ENCODE measurements at regions of chr3 and their contacts with region 1.

Region 1: DNA sequence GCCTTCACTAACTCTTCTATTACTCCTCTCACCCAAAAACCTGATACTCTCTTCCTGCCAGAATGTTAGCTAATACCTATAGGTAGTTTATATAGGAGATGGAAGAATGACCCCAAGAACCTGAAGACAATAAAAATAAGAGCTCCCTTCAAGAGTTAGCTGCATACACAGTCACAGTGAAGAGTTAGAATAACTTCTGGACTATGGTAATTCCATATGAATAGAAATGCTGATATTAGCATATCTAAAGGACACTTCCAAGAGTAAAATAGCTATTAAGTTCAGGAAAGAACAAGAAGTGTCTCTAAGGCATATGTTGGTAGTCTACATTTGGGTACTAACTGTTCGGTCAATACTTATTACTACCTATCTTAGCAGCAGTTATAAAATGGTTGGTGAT is 134.2 kb downstream of the VGLL3 start:
- DNase-seq: no peak
- ATAC-seq: no peak
- H3K4me3 ChIP-seq: no peak overlapping the region
- H3K27ac ChIP-seq: no peak overlapping the region
- H3K4me1 ChIP-seq: no peaks in the 10 kb centered on the region
- H3K27me3 ChIP-seq: no peaks in the 10 kb centered on the region
- CTCF ChIP-seq: no peak
- POLR2A ChIP-seq: no peak
- RAD21 ChIP-seq: no peak

Region 2: DNA sequence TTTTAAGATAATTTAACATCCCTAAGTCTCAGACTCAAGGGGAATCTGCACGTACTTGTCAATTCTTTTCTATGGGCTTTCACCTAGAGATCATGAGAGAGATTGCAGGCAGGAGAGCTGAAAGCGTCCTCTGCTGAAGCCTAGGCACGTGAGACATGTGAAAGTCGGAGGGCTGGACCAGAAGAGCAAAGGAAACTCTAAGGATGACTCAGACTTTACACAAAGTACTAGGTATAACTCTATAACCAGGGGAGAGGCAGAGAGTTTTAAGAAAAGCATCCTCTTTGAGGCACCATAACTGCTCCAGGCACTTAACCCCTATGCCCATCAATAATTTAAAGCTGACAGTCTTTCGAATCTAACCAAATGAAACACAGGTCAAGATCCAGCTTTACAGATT is 302.3 kb before region 1 on chr3:
- CTCF ChIA-PET with region 1: no interaction called
- POLR2A ChIA-PET with region 1: no interaction called
- dilution Hi-C with region 1: no loop called
- in situ Hi-C with region 1: no loop called
- intact Hi-C with region 1: no loop called
- DNase-seq: no peak
- ATAC-seq: no peak
- H3K4me3 ChIP-seq: no peak overlapping the region
- H3K27ac ChIP-seq: no peak overlapping the region
- H3K4me1 ChIP-seq: no peaks in the 10 kb centered on the region
- H3K27me3 ChIP-seq: no peaks in the 10 kb centered on the region
- CTCF ChIP-seq: no peak
- POLR2A ChIP-seq: no peak
- RAD21 ChIP-seq: no peak

Region 3: DNA sequence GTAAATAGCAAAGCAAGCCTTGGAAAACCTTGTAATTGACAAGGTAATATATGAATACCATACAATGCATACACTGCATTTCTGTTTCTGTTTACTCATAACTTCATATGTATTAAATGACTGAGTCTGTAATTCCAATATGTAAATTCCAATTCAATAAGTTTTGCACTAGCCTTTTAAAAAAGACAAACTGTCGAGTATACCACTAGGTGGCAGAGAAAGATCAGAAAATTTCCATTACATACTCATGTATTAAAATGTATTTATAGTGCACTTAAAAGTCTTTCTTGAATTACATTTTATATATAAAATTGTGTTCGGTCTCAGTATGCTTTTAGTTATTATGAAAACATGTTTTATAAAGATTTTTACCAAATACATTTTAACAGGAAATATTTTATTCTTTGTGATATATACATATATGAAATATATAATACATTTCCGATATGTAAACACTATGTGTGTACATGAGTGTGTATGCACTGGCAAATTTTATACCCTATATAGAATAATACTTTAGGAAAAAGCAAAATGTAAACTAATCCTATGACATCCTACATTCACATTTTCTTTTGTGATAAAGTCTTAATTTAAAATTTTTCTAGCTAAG is 82.5 kb before region 1 on chr3:
- CTCF ChIA-PET with region 1: no interaction called
- POLR2A ChIA-PET with region 1: no interaction called
- dilution Hi-C with region 1: no loop called
- in situ Hi-C with region 1: no loop called
- intact Hi-C with region 1: no loop called
- DNase-seq: peak; percentile 58
- ATAC-seq: peak; percentile 75
- H3K4me3 ChIP-seq: no peak overlapping the region
- H3K27ac ChIP-seq: no peak overlapping the region
- H3K4me1 ChIP-seq: no peaks in the 10 kb centered on the region
- H3K27me3 ChIP-seq: no peaks in the 10 kb centered on the region; the same call in 1 of the 2 replicates
- CTCF ChIP-seq: peak; percentile 65
- POLR2A ChIP-seq: no peak
- RAD21 ChIP-seq: peak; percentile 72

Region 4: DNA sequence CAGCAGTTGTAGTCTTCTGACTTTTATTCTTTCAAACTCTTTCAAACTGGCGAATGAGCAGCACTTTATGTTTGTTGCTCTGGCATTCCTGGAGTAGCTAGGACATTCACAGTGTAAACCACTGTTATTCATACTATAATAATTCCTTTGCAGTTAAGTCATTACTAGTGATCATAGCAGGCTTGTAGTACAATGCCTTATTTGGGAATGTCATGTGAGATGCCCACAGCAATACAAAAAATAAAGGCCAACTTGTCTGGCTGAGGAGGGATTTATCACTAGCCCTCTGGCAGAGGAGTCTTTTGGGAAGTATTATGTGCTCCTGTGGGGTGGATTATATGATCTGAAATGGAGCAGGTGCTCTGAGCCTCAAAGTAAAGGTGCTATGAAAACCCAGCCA is 62.9 kb before region 1 on chr3:
- CTCF ChIA-PET with region 1: no interaction called
- POLR2A ChIA-PET with region 1: no interaction called
- dilution Hi-C with region 1: no loop called
- in situ Hi-C with region 1: no loop called
- intact Hi-C with region 1: loop called (anchors 5 kb)
- DNase-seq: peak; percentile 97
- ATAC-seq: peak; percentile 95
- H3K4me3 ChIP-seq: no peak overlapping the region
- H3K27ac ChIP-seq: peak overlapping the region; percentile 85; the same call in 1 of the 2 replicates
- H3K4me1 ChIP-seq: peaks cover 5% of the 10 kb centered on the region; the same call in 1 of the 2 replicates
- H3K27me3 ChIP-seq: no peaks in the 10 kb centered on the region
- CTCF ChIP-seq: no peak
- POLR2A ChIP-seq: peak; percentile 69
- RAD21 ChIP-seq: no peak

Region 5: GRCh38 chr3:86814918-86815655 is 41.6 kb before region 1 on chr3:
- CTCF ChIA-PET with region 1: no interaction called
- POLR2A ChIA-PET with region 1: no interaction called
- dilution Hi-C with region 1: no loop called
- in situ Hi-C with region 1: no loop called
- intact Hi-C with region 1: loop called (anchors 5 kb)
- DNase-seq: peak; percentile 51
- ATAC-seq: peak; percentile 88
- H3K4me3 ChIP-seq: no peak overlapping the region
- H3K27ac ChIP-seq: no peak overlapping the region
- H3K4me1 ChIP-seq: peaks cover 4% of the 10 kb centered on the region
- H3K27me3 ChIP-seq: no peaks in the 10 kb centered on the region
- CTCF ChIP-seq: no peak
- POLR2A ChIP-seq: no peak
- RAD21 ChIP-seq: no peak

Measured in IMR-90 (cell line).